ENCODE measurements at regions of chr6 and their contacts with region 1.

Region 1: GRCh38 chr6:157954150-157955117 is 27.2 kb upstream of the SYNJ2 start:
- DNase-seq: peak; percentile 95
- ATAC-seq: peak; percentile 88
- H3K4me3 ChIP-seq: peak overlapping the region; percentile 49 to 72 (median 54)
- H3K27ac ChIP-seq: peak overlapping the region; percentile 87
- H3K4me1 ChIP-seq: peaks cover 50% of the 10 kb centered on the region
- H3K27me3 ChIP-seq: no peaks in the 10 kb centered on the region; a peak in 1 of 5 replicates
- CTCF ChIP-seq: peak; percentile 87
- EP300 ChIP-seq: peak in 1 of 2 experiments; percentile 86; a peak in 3 of 4 replicates
- POLR2A ChIP-seq: peak; percentile 33 to 74; a peak in 3 of 4 replicates
- RAD21 ChIP-seq: peak; percentile 80

Region 2: GRCh38 chr6:157494132-157494710 is 460.2 kb before region 1 on chr6:
- CTCF ChIA-PET with region 1: no interaction called
- POLR2A ChIA-PET with region 1: no interaction called
- in situ Hi-C with region 1: no loop called
- intact Hi-C with region 1: no loop called
- DNase-seq: no peak
- ATAC-seq: no peak
- H3K4me3 ChIP-seq: no peak overlapping the region
- H3K27ac ChIP-seq: no peak overlapping the region
- H3K4me1 ChIP-seq: 0 out of 2 replicates have a peak, but pooled peaks cover 4% of the 10 kb centered on the region
- H3K27me3 ChIP-seq: no peaks in the 10 kb centered on the region
- CTCF ChIP-seq: no peak
- EP300 ChIP-seq: no peak
- POLR2A ChIP-seq: no peak
- RAD21 ChIP-seq: no peak

Region 3: GRCh38 chr6:157967020-157967419 is 12.6 kb after region 1 on chr6:
- CTCF ChIA-PET with region 1: no interaction called
- POLR2A ChIA-PET with region 1: interaction called, 18 read pairs
- in situ Hi-C with region 1: no loop called
- intact Hi-C with region 1: no loop called
- DNase-seq: peak; percentile 45
- ATAC-seq: peak; percentile 96
- H3K4me3 ChIP-seq: peak overlapping the region in 2 of 3 experiments; percentile 37 to 47; a peak in 2 of 6 replicates
- H3K27ac ChIP-seq: no peak overlapping the region
- H3K4me1 ChIP-seq: peaks cover 35% of the 10 kb centered on the region
- H3K27me3 ChIP-seq: no peaks in the 10 kb centered on the region
- CTCF ChIP-seq: 0 out of 2 replicates have a peak, but pooled peaks have one; percentile 11
- EP300 ChIP-seq: 0 out of 4 replicates have a peak, but pooled peaks of 1 of the 2 experiments have one; percentile 28
- POLR2A ChIP-seq: no peak
- RAD21 ChIP-seq: no peak

Region 4: DNA sequence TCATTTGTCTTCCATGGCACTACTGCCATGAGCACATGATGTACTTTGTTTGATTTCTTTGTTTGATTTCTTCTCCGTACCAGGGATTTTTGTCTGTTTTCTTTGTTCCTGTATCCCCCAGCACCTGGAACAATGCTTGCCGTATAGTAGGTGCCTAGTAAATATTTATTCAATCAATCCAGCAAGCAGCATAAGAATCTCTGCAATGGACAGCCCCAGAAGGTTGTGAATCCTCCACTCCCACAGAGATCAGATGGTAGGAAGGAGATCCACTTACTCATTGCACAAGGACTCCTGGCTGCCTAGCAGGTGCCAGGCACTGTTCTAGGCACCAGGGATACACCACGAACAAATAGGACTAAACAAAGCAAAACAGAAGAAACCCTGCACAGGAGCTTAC is 20.5 kb after region 1 on chr6:
- CTCF ChIA-PET with region 1: no interaction called
- POLR2A ChIA-PET with region 1: interaction called, 48 read pairs
- in situ Hi-C with region 1: no loop called
- intact Hi-C with region 1: loop called (anchors 1 kb)
- DNase-seq: peak; percentile 83
- ATAC-seq: peak; percentile 43
- H3K4me3 ChIP-seq: peak overlapping the region in 1 of 3 experiments; percentile 26; a peak in 1 of 6 replicates
- H3K27ac ChIP-seq: no peak overlapping the region
- H3K4me1 ChIP-seq: peaks cover 67% of the 10 kb centered on the region
- H3K27me3 ChIP-seq: peaks cover 6 to 13% of the 10 kb centered on the region in 2 experiments; a peak in 4 of 5 replicates
- CTCF ChIP-seq: no peak
- EP300 ChIP-seq: 0 out of 4 replicates have a peak, but pooled peaks of 1 of the 2 experiments have one; percentile 12
- POLR2A ChIP-seq: no peak
- RAD21 ChIP-seq: no peak

Region 5: GRCh38 chr6:158031381-158032353 is 77.2 kb after region 1 on chr6:
- CTCF ChIA-PET with region 1: no interaction called
- POLR2A ChIA-PET with region 1: interaction called, 11 read pairs
- in situ Hi-C with region 1: no loop called
- intact Hi-C with region 1: no loop called
- DNase-seq: no peak
- ATAC-seq: no peak
- H3K4me3 ChIP-seq: no peak overlapping the region
- H3K27ac ChIP-seq: peak overlapping the region; percentile 25
- H3K4me1 ChIP-seq: peaks cover 66% of the 10 kb centered on the region
- H3K27me3 ChIP-seq: no peaks in the 10 kb centered on the region
- CTCF ChIP-seq: no peak
- EP300 ChIP-seq: no peak
- POLR2A ChIP-seq: peak in 1 of 2 experiments; percentile 29; a peak in 2 of 4 replicates
- RAD21 ChIP-seq: no peak

Region 6: GRCh38 chr6:158072083-158072721 is 117.8 kb after region 1 on chr6:
- CTCF ChIA-PET with region 1: interaction called, 8 read pairs
- POLR2A ChIA-PET with region 1: interaction called, 12 read pairs
- in situ Hi-C with region 1: no loop called
- intact Hi-C with region 1: loop called (anchors 10 kb)
- DNase-seq: peak; percentile 71
- ATAC-seq: peak; percentile 77
- H3K4me3 ChIP-seq: no peak overlapping the region
- H3K27ac ChIP-seq: peak overlapping the region; percentile 16
- H3K4me1 ChIP-seq: peaks cover 32% of the 10 kb centered on the region
- H3K27me3 ChIP-seq: no peaks in the 10 kb centered on the region
- CTCF ChIP-seq: peak; percentile 97
- EP300 ChIP-seq: no peak
- POLR2A ChIP-seq: no peak
- RAD21 ChIP-seq: peak; percentile 94